Activated CD8-positive, alpha-beta T cell treated with anti-CD3 and anti-CD28 coated beads for 36 hours (primary cell): ENCODE measurements at regions of chr1 and their contacts with region 1.

Region 1: GRCh38 chr1:222643938-222644635 is 26.2 kb downstream of the MIA3 start:
- DNase-seq: peak; percentile 98
- ATAC-seq: peak; percentile 97
- H3K4me3 Mint-ChIP-seq: peak overlapping the region; percentile 87
- H3K27ac Mint-ChIP-seq: peak overlapping the region; percentile 96
- H3K4me1 Mint-ChIP-seq: peaks cover 20% of the 10 kb centered on the region
- H3K27me3 Mint-ChIP-seq: no peaks in the 10 kb centered on the region
- CTCF ChIP-seq: no peak

Region 2: DNA sequence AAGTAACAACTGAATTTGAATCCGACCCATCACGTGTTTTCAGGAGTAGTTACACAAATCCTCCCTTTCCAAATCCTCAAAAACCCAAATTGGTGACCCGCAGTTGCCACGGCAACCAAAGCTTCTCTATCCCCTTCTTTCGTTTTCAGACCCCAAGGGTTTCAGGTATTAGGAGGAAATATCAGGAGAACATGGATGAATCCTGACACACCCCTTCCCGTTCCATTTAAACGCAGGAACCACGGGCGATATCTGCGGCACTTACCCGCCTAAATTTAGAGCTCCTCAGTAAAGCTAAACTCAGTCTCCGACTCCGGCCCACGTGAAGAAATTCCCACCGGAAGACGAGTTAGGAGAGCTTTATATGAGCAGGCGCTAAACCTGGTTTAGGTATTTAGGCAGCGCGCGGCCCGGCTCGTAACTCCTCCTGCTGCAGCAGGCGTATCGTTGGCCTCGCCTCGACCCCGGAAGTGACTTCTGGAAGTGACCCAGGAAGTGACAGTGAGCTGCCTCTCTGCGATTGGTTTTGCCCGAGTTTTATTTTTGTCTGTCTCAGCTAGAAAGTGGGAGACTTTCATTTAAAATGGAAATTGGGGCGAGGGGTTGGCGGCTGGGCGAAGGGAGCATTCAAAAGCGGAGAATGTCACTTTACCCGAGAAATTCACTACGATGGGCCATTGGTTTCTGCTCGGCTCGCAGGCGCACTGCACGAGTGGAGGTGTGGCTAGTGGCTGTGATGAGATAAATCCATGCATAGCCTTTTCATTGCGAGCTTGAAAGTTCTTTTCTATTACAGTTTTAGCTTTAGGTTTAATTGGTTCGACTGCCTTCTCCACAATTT is 54.4 kb before region 1 on chr1 and contains the start of gene TAF1A:
- CTCF ChIA-PET with region 1: interaction called, 7 read pairs
- POLR2A ChIA-PET with region 1: interaction called, 3 read pairs
- intact Hi-C with region 1: loop called (anchors 2 kb)
- DNase-seq: peak; percentile 92
- ATAC-seq: peak; percentile 99
- H3K4me3 Mint-ChIP-seq: peak within 1 kb of the TSS; percentile 98
- H3K27ac Mint-ChIP-seq: peak within 1 kb of the TSS; percentile 96
- H3K4me1 Mint-ChIP-seq: peaks cover 44% of the 10 kb centered on the region
- H3K27me3 Mint-ChIP-seq: no peaks in the 10 kb centered on the region
- CTCF ChIP-seq: no peak
- total RNA-seq, gene TAF1A: 18.4 to 19.0 TPM

Region 3: GRCh38 chr1:222654849-222655248 is 10.8 kb after region 1 on chr1:
- CTCF ChIA-PET with region 1: interaction called, 16 read pairs
- POLR2A ChIA-PET with region 1: interaction called, 33 read pairs
- intact Hi-C with region 1: loop called (anchors 1 kb)
- DNase-seq: peak; percentile 86
- ATAC-seq: peak; percentile 85
- H3K4me3 Mint-ChIP-seq: peak overlapping the region; percentile 38
- H3K27ac Mint-ChIP-seq: peak overlapping the region; percentile 88
- H3K4me1 Mint-ChIP-seq: peaks cover 56% of the 10 kb centered on the region
- H3K27me3 Mint-ChIP-seq: no peaks in the 10 kb centered on the region
- CTCF ChIP-seq: peak; percentile 16

Region 4: GRCh38 chr1:222713091-222713961 is 69.2 kb after region 1 on chr1:
- CTCF ChIA-PET with region 1: no interaction called
- POLR2A ChIA-PET with region 1: interaction called, 16 read pairs
- intact Hi-C with region 1: no loop called
- DNase-seq: peak; percentile 95
- ATAC-seq: peak; percentile 73
- H3K4me3 Mint-ChIP-seq: peak overlapping the region; percentile 94
- H3K27ac Mint-ChIP-seq: peak overlapping the region; percentile 100
- H3K4me1 Mint-ChIP-seq: peaks cover 41% of the 10 kb centered on the region
- H3K27me3 Mint-ChIP-seq: no peaks in the 10 kb centered on the region
- CTCF ChIP-seq: no peak